Posterior vena cava (tissue), 2 donors: ENCODE measurements at regions of chr5 and their contacts with region 1.

Region 1: DNA sequence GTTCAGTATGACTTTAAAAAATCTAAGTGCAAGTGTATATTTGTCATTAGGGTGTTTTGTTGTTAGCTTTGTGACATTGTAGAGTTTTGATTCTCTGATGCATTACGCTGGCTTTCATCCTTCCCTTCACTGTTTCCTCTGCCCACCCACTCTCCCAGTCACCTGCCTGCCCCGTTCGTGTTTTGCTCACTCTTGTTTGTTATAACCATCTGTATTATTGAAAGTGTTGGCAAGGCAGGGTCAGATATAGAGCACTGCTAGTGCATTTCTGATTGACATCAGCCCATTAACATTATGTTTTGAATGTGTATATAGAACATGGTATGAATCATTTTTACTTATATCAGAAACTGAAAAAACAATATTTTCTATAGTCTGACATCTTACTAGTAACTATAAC is 27.3 kb downstream of the SCGB3A1 start:
- DNase-seq: no peak

Region 2: GRCh38 chr5:180898621-180899246 is 334.7 kb after region 1 on chr5 and contains the start of gene BTNL8:
- intact Hi-C with region 1: loop called in 1 of 2 experiments (anchors 5 kb)
- DNase-seq: no peak
- total RNA-seq, gene BTNL8: not detected